ENCODE measurements at regions of chr20 and their contacts with region 1.

Region 1: GRCh38 chr20:47048054-47048453 is 153.4 kb downstream of the EYA2 start:
- DNase-seq: no peak
- H3K4me3 ChIP-seq: no peak overlapping the region
- H3K4me3 Mint-ChIP-seq: no peak overlapping the region
- H3K27ac Mint-ChIP-seq: no peak overlapping the region
- H3K4me1 ChIP-seq: no peaks in the 10 kb centered on the region
- H3K4me1 Mint-ChIP-seq: no peaks in the 10 kb centered on the region
- H3K27me3 ChIP-seq: no peaks in the 10 kb centered on the region; the same call in 1 of the 2 replicates
- H3K27me3 Mint-ChIP-seq: peaks cover 15% of the 10 kb centered on the region
- CTCF ChIP-seq: no peak

Region 2: DNA sequence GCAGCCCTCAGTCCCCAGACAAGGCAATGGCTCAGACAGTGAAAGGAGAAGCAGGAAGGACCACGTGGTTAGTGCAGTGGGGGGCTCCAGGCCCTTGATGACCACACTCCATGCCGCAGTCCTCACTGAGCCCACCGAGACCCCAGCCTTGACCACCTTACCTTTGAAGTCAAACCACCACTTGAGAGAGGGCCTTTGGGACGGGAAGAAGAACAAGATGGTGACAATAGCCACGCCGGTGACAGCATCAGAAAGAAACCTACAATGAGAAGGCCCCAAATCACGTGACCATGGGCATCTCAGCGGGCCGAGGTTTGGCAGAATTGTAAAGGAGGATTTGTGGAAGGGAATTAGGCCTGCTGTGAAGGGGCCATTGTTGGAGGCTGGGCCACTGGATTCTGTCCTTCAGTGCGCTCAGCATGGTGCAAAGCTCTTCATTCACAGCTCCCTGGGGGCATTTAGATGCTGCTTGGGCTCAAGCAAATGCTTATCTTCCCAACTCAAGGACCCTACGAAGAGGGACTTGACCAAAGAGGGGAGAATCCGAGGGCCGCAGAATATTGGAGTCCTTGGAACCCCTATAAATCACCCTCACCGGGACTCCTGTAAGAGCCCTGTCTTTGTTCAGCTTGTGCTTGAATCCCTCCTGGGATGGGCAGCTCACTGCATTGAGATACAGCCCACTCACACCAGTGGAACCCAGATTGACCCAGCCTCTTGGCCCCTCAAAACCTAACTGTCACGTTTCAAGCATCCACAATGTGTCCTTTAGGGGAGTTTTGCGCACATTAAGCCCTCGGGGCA is 464.4 kb before region 1 on chr20:
- CTCF ChIA-PET with region 1: interaction called, 11 read pairs
- POLR2A ChIA-PET with region 1: no interaction called
- intact Hi-C with region 1: no loop called
- DNase-seq: no peak
- H3K4me3 ChIP-seq: no peak overlapping the region
- H3K4me3 Mint-ChIP-seq: no peak overlapping the region
- H3K27ac Mint-ChIP-seq: no peak overlapping the region
- H3K4me1 ChIP-seq: no peaks in the 10 kb centered on the region
- H3K4me1 Mint-ChIP-seq: no peaks in the 10 kb centered on the region
- H3K27me3 ChIP-seq: no peaks in the 10 kb centered on the region; the same call in 1 of the 2 replicates
- H3K27me3 Mint-ChIP-seq: peaks cover 6% of the 10 kb centered on the region
- CTCF ChIP-seq: no peak

Region 3: GRCh38 chr20:47139857-47140535 is 91.9 kb after region 1 on chr20:
- CTCF ChIA-PET with region 1: no interaction called
- POLR2A ChIA-PET with region 1: no interaction called
- intact Hi-C with region 1: no loop called
- DNase-seq: peak; percentile 85 to 88
- H3K4me3 ChIP-seq: no peak overlapping the region
- H3K4me3 Mint-ChIP-seq: peak overlapping the region; percentile 34
- H3K27ac Mint-ChIP-seq: peak overlapping the region; percentile 76
- H3K4me1 ChIP-seq: peaks cover 32% of the 10 kb centered on the region
- H3K4me1 Mint-ChIP-seq: peaks cover 47% of the 10 kb centered on the region
- H3K27me3 ChIP-seq: no peaks in the 10 kb centered on the region
- H3K27me3 Mint-ChIP-seq: no peaks in the 10 kb centered on the region
- CTCF ChIP-seq: no peak

Region 4: GRCh38 chr20:47872343-47873058 is 824.4 kb after region 1 on chr20:
- CTCF ChIA-PET with region 1: no interaction called
- POLR2A ChIA-PET with region 1: no interaction called
- intact Hi-C with region 1: no loop called
- DNase-seq: no peak
- H3K4me3 ChIP-seq: no peak overlapping the region
- H3K4me3 Mint-ChIP-seq: no peak overlapping the region
- H3K27ac Mint-ChIP-seq: no peak overlapping the region
- H3K4me1 ChIP-seq: no peaks in the 10 kb centered on the region
- H3K4me1 Mint-ChIP-seq: no peaks in the 10 kb centered on the region
- H3K27me3 ChIP-seq: no peaks in the 10 kb centered on the region
- H3K27me3 Mint-ChIP-seq: no peaks in the 10 kb centered on the region
- CTCF ChIP-seq: no peak